Endothelial cell of umbilical vein (primary cell): ENCODE measurements at regions of chr14 and their contacts with region 1.

Region 1: DNA sequence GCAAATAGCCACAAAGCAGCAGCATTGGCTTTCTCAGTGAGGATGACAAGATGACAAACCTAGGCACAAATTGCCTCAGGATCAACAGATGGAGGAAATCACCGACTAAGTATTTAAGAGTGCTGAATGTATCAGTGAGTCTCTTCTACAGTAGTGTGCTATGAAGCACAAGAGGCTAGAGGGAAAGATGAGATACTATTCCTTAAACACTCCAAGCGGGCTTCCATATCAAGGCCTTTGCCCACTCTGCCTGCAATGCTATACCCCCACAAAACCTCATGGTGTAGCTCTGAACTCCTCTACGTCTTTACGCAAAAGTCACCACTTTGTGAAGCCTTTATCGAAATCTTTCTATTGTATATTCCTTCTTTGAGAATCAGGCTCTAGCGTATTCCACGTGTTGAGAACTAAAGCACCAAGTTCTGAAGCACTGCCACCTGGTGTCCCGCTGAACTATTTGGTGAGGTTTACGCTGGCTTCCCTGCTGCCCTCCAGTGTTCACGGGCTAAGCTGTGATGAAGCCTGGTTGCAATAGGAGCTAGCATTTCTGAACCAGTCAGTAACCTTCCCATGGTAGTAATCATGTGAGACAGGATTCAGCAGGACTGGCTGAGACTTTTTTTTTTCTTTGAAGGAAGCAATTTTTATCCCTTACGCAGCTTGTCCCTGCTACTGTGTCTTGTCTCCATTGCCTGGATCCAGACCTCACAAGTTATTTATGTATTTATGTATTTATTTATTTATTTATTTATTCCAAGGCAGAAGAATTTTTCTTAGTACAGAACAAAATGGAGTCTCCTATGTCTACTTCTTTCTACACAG is 426.5 kb upstream of the OR4E1 start:
- DNase-seq: peak; percentile 85
- H3K4me3 ChIP-seq: no peak overlapping the region
- H3K27ac ChIP-seq: no peak overlapping the region
- H3K4me1 ChIP-seq: peaks cover 9% of the 10 kb centered on the region
- H3K27me3 ChIP-seq: no peaks in the 10 kb centered on the region
- CTCF ChIP-seq: peak; percentile 77 to 80
- POLR2A ChIP-seq: no peak

Region 2: DNA sequence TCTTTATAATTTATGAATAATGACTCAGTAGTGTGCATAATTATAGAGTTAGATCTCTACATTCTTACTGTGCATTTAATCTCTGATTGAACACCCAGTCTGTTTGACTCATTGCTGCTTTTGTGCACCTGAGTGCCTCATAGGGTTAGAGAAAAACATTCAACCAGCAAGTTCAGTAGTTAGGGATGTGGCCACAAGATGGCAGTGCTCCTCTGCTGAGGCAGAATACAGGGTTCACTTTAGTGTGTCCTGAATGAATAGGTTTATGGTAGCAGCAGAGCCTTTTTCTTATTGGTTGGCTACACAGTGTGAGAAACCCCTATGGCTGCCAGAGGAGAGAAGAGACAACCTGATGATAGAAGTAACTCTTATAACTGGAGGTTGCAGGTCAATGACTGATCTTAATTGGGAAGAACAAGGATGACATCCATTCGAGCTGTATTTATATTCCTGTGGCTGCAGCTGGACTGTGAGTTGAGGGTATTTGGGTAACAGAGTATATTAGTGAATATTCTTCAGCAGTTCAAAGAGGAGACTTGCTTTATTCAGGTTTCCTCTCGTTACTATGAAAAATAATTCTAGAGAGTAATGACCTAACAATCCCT is 231.6 kb before region 1 on chr14:
- CTCF ChIA-PET with region 1: interaction called, 9 read pairs
- POLR2A ChIA-PET with region 1: no interaction called
- dilution Hi-C with region 1: no loop called
- intact Hi-C with region 1: loop called (anchors 2 kb)
- DNase-seq: peak; percentile 90
- H3K4me3 ChIP-seq: no peak overlapping the region
- H3K27ac ChIP-seq: peak overlapping the region; percentile 88
- H3K4me1 ChIP-seq: peaks cover 29% of the 10 kb centered on the region
- H3K27me3 ChIP-seq: no peaks in the 10 kb centered on the region
- CTCF ChIP-seq: peak; percentile 80 to 83
- POLR2A ChIP-seq: no peak

Region 3: GRCh38 chr14:21987937-21988336 is 112.2 kb before region 1 on chr14:
- CTCF ChIA-PET with region 1: interaction called, 14 read pairs
- POLR2A ChIA-PET with region 1: no interaction called
- dilution Hi-C with region 1: no loop called
- intact Hi-C with region 1: no loop called
- DNase-seq: peak; percentile 39
- H3K4me3 ChIP-seq: no peak overlapping the region
- H3K27ac ChIP-seq: no peak overlapping the region
- H3K4me1 ChIP-seq: no peaks in the 10 kb centered on the region
- H3K27me3 ChIP-seq: peaks cover 5 to 14% of the 10 kb centered on the region in 2 experiments
- CTCF ChIP-seq: peak; percentile 60 to 69
- POLR2A ChIP-seq: no peak

Region 4: DNA sequence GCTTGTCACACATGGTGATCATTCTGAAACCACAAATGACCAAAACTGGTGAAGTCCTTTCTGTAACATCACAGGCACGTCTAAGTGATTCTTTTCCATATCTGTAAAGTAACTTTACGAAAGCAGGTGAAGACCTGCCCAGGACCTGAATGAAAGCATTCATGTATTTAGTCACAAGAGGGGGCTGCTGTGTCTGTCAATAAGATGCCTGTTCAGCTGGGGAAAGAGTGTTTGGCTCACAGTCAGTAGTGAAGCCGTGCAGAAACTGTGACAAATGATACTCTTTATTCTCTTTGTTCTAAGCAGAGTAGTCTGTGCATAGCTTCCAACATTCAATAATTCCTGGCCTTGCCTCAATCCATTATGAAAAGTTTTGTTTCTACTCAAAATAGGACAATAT is 53.0 kb before region 1 on chr14:
- CTCF ChIA-PET with region 1: interaction called, 14 read pairs
- POLR2A ChIA-PET with region 1: no interaction called
- dilution Hi-C with region 1: no loop called
- intact Hi-C with region 1: no loop called
- DNase-seq: peak; percentile 34
- H3K4me3 ChIP-seq: no peak overlapping the region
- H3K27ac ChIP-seq: no peak overlapping the region
- H3K4me1 ChIP-seq: no peaks in the 10 kb centered on the region
- H3K27me3 ChIP-seq: peaks cover 3 to 17% of the 10 kb centered on the region in 2 experiments
- CTCF ChIP-seq: peak; percentile 30 to 41
- POLR2A ChIP-seq: no peak

Region 5: GRCh38 chr14:22084393-22085281 is 15.5 kb before region 1 on chr14:
- CTCF ChIA-PET with region 1: interaction called, 138 read pairs
- POLR2A ChIA-PET with region 1: no interaction called
- dilution Hi-C with region 1: no loop called
- intact Hi-C with region 1: loop called (anchors 1 kb)
- DNase-seq: peak; percentile 67
- H3K4me3 ChIP-seq: no peak overlapping the region
- H3K27ac ChIP-seq: no peak overlapping the region
- H3K4me1 ChIP-seq: peaks cover 4% of the 10 kb centered on the region
- H3K27me3 ChIP-seq: peaks cover 0 to under 1% of the 10 kb centered on the region in 2 experiments
- CTCF ChIP-seq: peak; percentile 47 to 60
- POLR2A ChIP-seq: no peak

Region 6: DNA sequence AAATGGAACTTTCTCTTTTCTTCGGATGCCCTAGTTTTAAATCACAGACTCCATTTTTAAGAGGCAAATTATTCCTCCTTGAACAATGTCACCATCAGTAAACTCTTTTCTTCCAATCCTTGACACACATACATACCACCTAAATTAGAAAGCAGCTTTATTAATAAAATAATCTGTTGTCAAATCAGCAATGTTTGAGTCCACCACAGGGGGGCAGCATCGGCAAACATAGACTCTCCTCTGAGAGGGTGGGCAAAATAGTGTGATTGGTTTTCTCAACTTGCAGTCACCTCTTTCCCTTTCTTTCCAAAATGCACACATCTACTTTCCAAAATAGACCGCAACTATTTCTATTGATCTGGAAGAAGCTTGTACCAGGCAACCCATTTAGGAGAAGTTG is 11.9 kb after region 1 on chr14:
- CTCF ChIA-PET with region 1: interaction called, 18 read pairs
- POLR2A ChIA-PET with region 1: no interaction called
- dilution Hi-C with region 1: no loop called
- intact Hi-C with region 1: no loop called
- DNase-seq: peak; percentile 25
- H3K4me3 ChIP-seq: no peak overlapping the region
- H3K27ac ChIP-seq: no peak overlapping the region
- H3K4me1 ChIP-seq: no peaks in the 10 kb centered on the region
- H3K27me3 ChIP-seq: peaks cover 5 to 19% of the 10 kb centered on the region in 2 experiments
- CTCF ChIP-seq: peak; percentile 48 to 64
- POLR2A ChIP-seq: no peak

Region 7: DNA sequence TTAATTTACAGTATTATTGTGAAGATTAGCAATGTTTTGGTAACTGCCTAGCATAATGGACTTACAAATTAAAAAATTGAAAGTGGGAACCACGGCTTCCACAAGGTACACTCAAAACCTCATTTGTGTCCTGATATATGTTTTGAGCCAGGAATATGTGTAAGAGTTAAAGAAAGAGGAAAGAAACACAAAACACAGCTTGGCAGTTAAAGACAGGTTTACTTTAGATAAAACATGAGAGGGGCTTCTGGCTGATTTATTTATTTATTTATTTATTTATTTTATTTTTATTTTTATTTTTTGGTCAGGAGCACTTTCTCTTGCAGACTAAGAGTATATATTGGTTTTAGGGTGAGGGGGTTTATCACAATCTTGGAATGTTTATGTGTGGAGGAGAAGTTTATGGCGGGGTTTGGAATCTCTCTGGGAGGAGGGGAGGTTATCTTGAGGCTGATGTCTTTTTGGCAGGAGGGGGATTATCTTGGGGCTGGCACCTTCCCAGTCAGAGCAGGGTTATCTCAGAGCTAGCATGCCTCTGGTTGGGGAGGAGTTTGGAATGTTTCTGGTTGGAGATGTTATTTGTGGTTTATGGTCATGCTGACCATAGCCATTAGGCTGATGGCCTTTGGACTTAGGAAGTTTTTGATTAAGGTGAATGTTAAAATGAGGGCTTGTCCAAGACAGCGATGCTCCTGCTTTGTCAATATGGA is 52.2 kb after region 1 on chr14:
- CTCF ChIA-PET with region 1: no interaction called
- POLR2A ChIA-PET with region 1: no interaction called
- dilution Hi-C with region 1: no loop called
- intact Hi-C with region 1: no loop called
- DNase-seq: no peak
- H3K4me3 ChIP-seq: no peak overlapping the region
- H3K27ac ChIP-seq: no peak overlapping the region
- H3K4me1 ChIP-seq: no peaks in the 10 kb centered on the region
- H3K27me3 ChIP-seq: peaks cover 9 to 25% of the 10 kb centered on the region in 2 experiments
- CTCF ChIP-seq: no peak
- POLR2A ChIP-seq: no peak

Region 8: DNA sequence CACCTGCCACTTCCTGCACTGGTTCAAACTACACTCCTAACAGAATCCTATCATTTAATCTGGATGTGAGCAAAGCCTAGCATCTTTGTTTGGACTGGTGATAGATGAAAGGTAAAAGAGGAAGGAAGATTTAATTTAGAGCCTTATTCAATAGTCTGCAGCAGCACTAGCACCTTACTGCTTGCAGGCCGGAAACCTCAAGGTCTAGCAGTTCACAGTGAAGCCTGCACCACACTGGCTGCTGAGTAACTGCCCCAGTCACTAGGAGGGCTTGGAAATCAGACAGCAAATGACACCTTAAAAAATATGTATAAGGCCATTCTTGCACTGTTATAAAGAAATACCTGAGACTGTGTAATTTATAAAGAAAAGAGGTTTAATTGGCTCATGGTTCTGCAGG is 130.9 kb after region 1 on chr14:
- CTCF ChIA-PET with region 1: no interaction called
- POLR2A ChIA-PET with region 1: no interaction called
- dilution Hi-C with region 1: no loop called
- intact Hi-C with region 1: no loop called
- DNase-seq: no peak
- H3K4me3 ChIP-seq: no peak overlapping the region
- H3K27ac ChIP-seq: no peak overlapping the region
- H3K4me1 ChIP-seq: peaks cover 4% of the 10 kb centered on the region
- H3K27me3 ChIP-seq: peaks cover 3 to 9% of the 10 kb centered on the region in 2 experiments
- CTCF ChIP-seq: no peak
- POLR2A ChIP-seq: no peak

Region 9: DNA sequence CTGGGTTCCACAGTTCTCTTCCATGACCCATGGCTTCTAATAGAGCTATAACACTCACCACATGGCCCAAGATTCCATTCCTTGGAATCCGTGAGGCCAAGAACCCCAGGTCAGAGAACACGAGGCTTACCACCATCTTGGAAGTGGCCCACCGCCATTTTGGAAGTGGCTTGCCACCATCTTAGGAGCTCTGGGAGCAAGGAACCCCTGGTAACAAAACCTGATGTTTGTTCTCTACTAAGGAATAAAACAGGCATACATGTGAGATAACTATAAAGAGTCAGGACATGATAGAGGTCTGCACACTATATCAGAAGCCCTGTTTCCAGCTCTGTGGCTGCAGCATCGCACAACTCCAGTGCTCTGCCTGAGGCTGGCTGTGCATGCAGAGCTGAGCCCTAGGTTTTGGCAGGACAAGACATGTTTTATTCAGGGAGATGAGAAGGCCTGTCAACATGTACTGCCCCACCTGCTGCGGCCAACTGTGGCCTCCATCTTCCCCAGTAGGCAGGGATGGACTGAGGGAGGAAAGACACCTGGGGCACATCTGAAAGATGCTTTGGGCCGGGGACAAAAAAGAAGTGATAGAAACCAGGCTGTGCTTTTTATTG is 143.9 kb after region 1 on chr14:
- CTCF ChIA-PET with region 1: no interaction called
- POLR2A ChIA-PET with region 1: no interaction called
- dilution Hi-C with region 1: no loop called
- intact Hi-C with region 1: no loop called
- DNase-seq: no peak
- H3K4me3 ChIP-seq: no peak overlapping the region
- H3K27ac ChIP-seq: no peak overlapping the region
- H3K4me1 ChIP-seq: no peaks in the 10 kb centered on the region
- H3K27me3 ChIP-seq: peaks cover 3 to 6% of the 10 kb centered on the region in 2 experiments
- CTCF ChIP-seq: no peak
- POLR2A ChIP-seq: no peak